Prostate gland (tissue), 2 donors: ENCODE measurements at regions of chr7 and their contacts with region 1.

Region 1: DNA sequence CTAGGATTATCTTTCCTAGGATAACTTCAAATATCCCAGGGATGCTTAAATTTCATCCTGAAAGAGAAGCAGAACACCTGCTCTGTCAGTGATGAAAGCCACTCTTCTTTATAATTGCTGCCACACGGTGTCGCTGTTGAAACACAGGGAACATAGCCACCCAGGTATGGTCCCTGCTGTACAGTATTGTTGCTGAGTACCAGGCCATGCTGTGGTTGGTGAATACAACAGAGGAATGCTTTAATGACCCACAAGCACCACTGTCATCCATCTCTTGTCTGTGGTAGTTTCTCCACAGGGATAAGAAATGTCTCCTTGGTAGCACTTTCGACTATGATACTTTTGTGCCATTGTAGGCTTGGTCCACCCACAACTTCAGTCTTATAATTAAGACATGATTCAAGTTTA is 70.6 kb upstream of the STARD3NL start:
- DNase-seq: peak; percentile 79
- H3K4me3 ChIP-seq: no peak overlapping the region
- H3K27ac ChIP-seq: no peak overlapping the region
- H3K4me1 ChIP-seq: no peaks in the 10 kb centered on the region
- H3K27me3 ChIP-seq: no peaks in the 10 kb centered on the region
- CTCF ChIP-seq: peak; percentile 69 to 88 (median 80)
- POLR2A ChIP-seq: no peak

Region 2: GRCh38 chr7:37901236-37901827 is 206.2 kb before region 1 on chr7:
- intact Hi-C with region 1: loop called (anchors 5 kb)
- DNase-seq: no peak
- H3K4me3 ChIP-seq: no peak overlapping the region
- H3K27ac ChIP-seq: no peak overlapping the region
- H3K4me1 ChIP-seq: no peaks in the 10 kb centered on the region
- H3K27me3 ChIP-seq: no peaks in the 10 kb centered on the region
- CTCF ChIP-seq: peak; percentile 38 to 65 (median 46)
- POLR2A ChIP-seq: no peak

Region 3: GRCh38 chr7:37916673-37917660 is 190.5 kb before region 1 on chr7 and contains the start of gene SFRP4:
- intact Hi-C with region 1: loop called (anchors 5 kb)
- DNase-seq: no peak
- H3K4me3 ChIP-seq: peak within 1 kb of the TSS; percentile 36 to 42
- H3K27ac ChIP-seq: peak within 1 kb of the TSS; percentile 39 to 62
- H3K4me1 ChIP-seq: peaks cover 4% of the 10 kb centered on the region
- H3K27me3 ChIP-seq: no peaks in the 10 kb centered on the region
- CTCF ChIP-seq: peak; percentile 12 to 68 (median 60)
- POLR2A ChIP-seq: no peak
- total RNA-seq, gene SFRP4: 3.2 to 25.3 TPM

Region 4: DNA sequence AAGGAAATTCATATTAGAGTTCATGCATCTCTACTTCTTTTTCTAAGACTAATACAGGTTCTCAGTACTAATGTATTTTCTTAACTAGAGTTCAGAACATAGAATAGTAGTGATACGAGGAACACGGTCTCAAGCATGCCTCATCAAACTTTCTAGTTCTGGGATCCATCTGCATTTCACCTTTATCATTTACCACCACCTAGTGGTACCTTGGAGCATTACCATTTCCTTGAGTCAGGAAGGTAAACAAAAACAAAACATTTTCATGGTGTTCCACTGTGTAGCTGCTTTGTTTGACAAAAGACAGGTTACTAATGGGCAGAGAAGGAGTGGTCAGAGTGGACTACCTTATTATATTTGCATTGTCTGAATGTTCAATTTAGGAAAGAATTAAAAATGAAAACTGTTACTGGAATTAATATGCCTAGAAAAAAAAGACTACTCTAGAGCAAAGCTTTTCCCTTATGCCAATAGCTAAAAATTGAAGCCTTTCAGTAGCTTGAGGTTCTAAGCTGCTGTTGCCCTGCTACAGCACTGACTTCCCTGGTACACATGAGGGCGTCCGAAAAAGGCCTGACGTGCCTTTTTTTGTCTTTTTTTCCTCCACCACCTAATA is 115.1 kb after region 1 on chr7:
- intact Hi-C with region 1: loop called (anchors 1 kb)
- DNase-seq: peak; percentile 66
- H3K4me3 ChIP-seq: no peak overlapping the region
- H3K27ac ChIP-seq: peak overlapping the region; percentile 67 to 79
- H3K4me1 ChIP-seq: peaks cover 16% of the 10 kb centered on the region
- H3K27me3 ChIP-seq: no peaks in the 10 kb centered on the region
- CTCF ChIP-seq: peak; percentile 38 to 96 (median 94)
- POLR2A ChIP-seq: no peak

Region 5: DNA sequence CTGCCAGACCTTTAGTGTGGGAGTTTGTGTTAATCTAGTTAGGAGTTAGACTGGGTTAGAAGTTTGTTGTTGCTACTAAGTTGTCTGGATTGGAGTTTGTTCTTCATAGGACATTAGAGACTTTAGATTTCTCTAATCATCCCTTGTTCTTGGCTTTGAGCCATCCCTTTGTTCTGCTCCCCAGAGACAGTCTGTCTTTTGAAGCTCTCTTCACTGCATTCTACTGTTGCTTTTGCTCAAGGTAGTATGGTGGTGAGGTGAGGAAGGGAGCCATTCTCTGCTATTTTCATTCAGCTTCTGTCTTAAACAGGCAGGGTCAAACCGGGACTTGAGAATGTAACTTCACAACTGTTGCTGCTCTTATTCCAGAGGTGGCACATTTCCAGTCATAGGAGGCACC is 176.3 kb after region 1 on chr7:
- intact Hi-C with region 1: no loop called
- DNase-seq: no peak
- H3K4me3 ChIP-seq: no peak overlapping the region
- H3K27ac ChIP-seq: no peak overlapping the region
- H3K4me1 ChIP-seq: no peaks in the 10 kb centered on the region
- H3K27me3 ChIP-seq: no peaks in the 10 kb centered on the region
- CTCF ChIP-seq: no peak
- POLR2A ChIP-seq: no peak

Region 6: DNA sequence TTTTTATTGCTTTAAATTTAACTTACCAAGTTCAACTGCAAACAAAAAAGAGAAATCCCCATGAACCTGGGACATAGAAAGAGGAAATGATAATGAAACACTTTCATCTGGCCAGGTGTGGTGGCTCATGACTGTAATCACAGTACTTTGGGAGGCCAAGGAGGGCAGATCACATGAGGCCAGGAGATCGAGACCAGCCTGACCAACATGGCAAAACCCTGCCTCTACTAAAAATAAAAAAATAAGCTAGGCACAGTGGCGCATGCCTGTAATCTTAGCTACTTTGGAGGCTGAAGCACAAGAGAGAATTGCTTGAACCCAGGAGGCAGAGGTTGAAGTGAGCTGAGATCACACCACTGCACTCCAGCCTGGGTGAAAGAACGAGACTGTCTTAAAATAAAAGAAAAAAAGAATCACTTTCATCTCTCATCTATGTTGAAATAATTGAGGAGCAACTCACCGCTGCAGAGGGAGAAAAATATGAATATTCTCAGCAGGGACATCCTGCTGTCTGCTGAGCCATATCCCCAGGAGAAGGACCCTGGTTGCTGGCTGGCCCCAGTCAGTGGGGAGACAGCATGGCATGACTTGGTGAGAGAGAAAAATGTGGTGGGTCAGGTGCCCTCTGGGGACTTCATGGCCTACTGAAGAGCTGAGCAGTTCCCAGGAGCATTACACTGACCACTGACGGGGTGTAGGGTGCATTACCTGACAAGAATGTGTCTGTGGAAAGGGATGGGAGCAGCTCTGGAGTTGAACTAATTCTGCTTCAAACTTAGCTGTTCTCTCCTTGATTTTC is 188.8 kb after region 1 on chr7:
- intact Hi-C with region 1: no loop called
- DNase-seq: no peak
- H3K4me3 ChIP-seq: no peak overlapping the region
- H3K27ac ChIP-seq: peak overlapping the region; percentile 57 to 70
- H3K4me1 ChIP-seq: peaks cover 2% of the 10 kb centered on the region
- H3K27me3 ChIP-seq: no peaks in the 10 kb centered on the region
- CTCF ChIP-seq: no peak
- POLR2A ChIP-seq: no peak